ENCODE measurements at regions of chrX and their contacts with region 1.

Region 1: GRCh38 chrX:14043209-14043608 is 13.5 kb upstream of the GEMIN8 start:
- DNase-seq: no peak
- H3K4me3 ChIP-seq: no peak overlapping the region
- H3K27ac ChIP-seq: no peak overlapping the region
- H3K4me1 ChIP-seq: no peaks in the 10 kb centered on the region
- H3K27me3 ChIP-seq: no peaks in the 10 kb centered on the region
- CTCF ChIP-seq: no peak
- POLR2A ChIP-seq: no peak

Region 2: GRCh38 chrX:13985697-13986435 is 57.3 kb before region 1 on chrX:
- intact Hi-C with region 1: no loop called
- DNase-seq: no peak
- H3K4me3 ChIP-seq: no peak overlapping the region
- H3K27ac ChIP-seq: no peak overlapping the region
- H3K4me1 ChIP-seq: no peaks in the 10 kb centered on the region
- H3K27me3 ChIP-seq: no peaks in the 10 kb centered on the region
- CTCF ChIP-seq: no peak
- POLR2A ChIP-seq: no peak

Region 3: DNA sequence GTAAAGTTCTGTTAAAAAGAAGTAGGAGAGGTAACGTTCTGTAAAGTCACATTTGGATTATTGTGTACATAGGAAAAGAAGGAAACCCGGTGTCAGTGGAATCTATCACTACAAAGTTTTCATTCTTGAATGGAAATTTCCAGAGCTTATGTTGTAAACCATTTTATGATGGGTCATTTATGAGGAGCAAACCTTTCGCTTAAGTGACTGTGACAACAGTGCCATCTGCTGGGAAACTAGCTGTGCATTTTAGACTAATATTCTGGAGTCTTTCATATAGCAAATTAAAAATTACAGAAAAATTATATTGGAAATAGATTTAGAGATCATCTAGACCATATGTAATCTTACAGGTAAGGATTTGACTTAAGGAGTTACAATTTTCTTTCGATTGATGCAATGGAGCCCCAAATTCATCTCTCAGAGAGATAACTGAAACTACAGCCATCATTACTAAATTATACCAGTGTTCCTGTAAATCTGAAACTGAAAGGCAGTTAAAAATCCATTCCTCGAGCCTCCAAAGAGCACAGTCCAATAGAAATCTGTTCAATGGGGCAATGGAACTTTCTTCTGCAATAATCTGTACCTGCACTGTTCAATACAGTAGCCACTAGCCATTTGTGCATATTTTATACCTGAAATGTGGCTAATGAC is 1199.8 kb after region 1 on chrX:
- intact Hi-C with region 1: loop called (anchors 5 kb)
- DNase-seq: peak; percentile 5
- H3K4me3 ChIP-seq: no peak overlapping the region
- H3K27ac ChIP-seq: no peak overlapping the region
- H3K4me1 ChIP-seq: no peaks in the 10 kb centered on the region
- H3K27me3 ChIP-seq: no peaks in the 10 kb centered on the region
- CTCF ChIP-seq: peak in 3 of 4 experiments; percentile 33 to 58 (median 53)
- POLR2A ChIP-seq: no peak

Measured in prostate gland (tissue), 2 donors.